ENCODE measurements at regions of chr15 and their contacts with region 1.

Region 1: GRCh38 chr15:90233376-90234095 is at the start of gene CIB1:
- DNase-seq: peak; percentile 98
- H3K4me3 Mint-ChIP-seq: peak within 1 kb of the TSS; percentile 89
- H3K27ac Mint-ChIP-seq: peak within 1 kb of the TSS; percentile 90
- H3K4me1 Mint-ChIP-seq: peaks cover 49% of the 10 kb centered on the region
- H3K27me3 Mint-ChIP-seq: no peaks in the 10 kb centered on the region
- total RNA-seq, gene CIB1: 156 to 171 TPM

Region 2: DNA sequence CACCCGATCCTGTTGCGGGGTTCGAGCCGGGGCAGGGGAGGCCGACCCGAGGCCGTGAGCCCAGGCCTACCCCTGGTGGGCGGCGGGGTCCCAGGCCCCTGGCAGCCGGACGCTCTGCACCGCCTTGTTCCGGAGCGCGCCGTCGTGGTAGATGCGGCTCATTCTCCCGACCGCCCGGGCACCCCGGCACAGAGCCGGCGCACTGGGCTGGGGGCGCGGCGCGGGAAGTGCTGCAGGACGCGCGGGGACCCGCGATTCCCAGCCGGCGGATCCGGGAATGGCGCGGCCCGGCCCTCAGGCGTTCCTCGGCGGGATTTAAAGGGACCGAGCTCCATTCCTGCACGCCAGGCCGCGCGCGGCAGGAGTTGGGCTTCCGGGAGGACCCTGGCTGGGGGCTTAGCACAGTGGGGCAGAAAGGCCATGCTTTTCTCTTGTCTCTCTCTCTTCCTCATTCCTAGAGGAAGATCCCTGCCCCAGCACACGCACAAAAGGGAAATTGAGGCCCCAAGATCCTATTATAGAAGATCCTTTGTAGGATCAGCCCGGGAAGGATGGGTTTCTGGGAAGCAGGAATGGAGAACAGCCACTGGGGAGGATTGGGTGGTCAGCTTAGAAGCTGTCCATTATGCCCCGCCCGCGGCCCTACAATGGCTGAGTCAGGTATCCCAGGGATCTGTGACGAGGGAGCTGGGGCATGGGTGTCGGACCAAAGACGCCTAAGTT is 320.7 kb before region 1 on chr15 and contains the start of gene ARPIN:
- CTCF ChIA-PET with region 1: no interaction called
- intact Hi-C with region 1: no loop called
- DNase-seq: no peak
- H3K4me3 Mint-ChIP-seq: peak within 1 kb of the TSS; percentile 19
- H3K27ac Mint-ChIP-seq: no peak within 1 kb of the TSS
- H3K4me1 Mint-ChIP-seq: peaks cover 6% of the 10 kb centered on the region
- H3K27me3 Mint-ChIP-seq: peaks cover 37% of the 10 kb centered on the region
- total RNA-seq, gene ARPIN: not detected

Region 3: DNA sequence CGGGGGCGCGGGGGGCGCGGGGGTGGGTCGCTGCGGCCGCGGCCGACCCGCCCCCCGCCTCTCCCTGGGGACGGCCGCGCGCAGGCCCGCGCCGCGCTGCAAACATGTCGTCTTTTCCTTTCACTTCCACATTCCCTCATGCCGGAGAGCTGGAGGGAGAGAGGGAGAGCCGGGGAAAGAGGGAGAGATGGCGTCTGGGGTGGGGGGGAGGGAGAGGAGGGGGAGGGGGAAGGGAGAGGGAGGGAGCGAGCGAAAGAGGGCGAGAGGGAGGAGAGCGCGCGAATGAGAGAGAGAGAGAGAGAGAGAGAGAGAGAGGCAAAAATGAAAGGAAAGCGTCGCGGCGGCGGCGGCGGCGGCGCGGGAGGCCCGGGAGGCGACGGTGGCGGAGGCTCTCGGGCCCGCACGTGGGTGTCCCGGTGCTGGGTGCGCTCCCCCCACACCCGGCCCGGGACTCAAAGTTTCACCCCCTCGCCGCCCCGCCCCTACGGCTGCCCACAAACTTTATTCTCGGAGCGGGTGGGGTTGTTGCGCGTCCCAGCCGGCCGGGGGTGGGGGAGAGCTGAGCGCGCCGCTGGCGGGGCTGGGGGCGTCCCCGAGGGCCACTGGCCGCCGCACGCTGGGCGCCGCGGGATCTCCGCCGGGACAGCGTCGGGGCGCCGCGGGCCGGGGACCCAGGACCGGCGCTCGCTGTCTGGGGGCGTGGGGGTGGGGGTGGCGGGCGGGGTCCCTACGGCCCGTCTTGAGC is 231.7 kb before region 1 on chr15:
- CTCF ChIA-PET with region 1: no interaction called
- intact Hi-C with region 1: loop called (anchors 5 kb)
- DNase-seq: peak; percentile 70
- H3K4me3 Mint-ChIP-seq: peak overlapping the region; percentile 82
- H3K27ac Mint-ChIP-seq: peak overlapping the region; percentile 75
- H3K4me1 Mint-ChIP-seq: peaks cover 57% of the 10 kb centered on the region
- H3K27me3 Mint-ChIP-seq: no peaks in the 10 kb centered on the region

Region 4: DNA sequence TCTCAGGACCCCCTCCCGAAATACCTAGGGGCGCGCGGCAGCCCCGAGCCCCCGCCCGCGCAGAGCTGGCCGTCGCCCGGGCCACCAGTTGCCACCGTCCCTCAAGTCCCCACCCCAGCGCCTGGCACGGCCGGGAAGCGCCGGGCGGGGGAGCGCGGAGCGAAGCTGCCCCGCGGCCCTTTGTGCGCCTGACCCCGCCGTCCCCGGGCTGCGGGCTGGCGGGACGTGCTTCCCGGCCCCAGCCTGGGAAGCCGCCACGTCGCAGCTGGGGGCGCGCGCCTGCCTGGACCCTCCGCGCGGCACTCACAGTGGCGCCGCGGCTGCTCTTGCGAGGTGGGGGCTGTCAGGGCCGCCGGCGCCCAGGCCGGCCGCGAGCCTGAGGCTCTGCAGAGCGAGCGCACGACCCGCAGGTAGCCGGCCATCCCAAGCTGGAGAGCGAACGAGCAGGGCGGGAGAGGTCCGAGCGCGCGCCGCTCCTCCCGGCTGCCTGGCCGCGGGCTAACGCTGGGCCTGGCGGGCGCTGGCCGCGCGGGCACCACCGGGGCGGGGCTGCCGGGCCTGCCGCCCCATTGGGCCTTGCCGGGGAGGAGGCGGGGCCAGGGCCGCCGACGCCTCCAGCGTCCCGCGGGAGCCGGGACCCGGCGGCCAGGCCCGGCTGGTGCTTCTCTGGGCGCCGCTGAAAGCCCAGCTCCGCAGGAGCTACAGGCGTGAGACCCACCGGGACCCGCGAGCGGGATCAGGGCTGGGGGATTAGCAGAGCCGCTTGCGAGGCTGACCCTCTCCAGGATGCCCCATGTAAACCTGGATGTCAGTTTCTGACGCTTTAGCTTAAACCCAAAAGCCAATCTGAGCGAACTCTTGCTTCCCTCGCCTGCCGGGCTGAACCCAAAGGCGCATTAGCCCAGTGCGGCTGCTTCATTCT is 131.3 kb before region 1 on chr15 and contains the start of gene IDH2:
- CTCF ChIA-PET with region 1: interaction called, 3 read pairs
- intact Hi-C with region 1: loop called (anchors 1 kb)
- DNase-seq: peak; percentile 64
- H3K4me3 Mint-ChIP-seq: peak within 1 kb of the TSS; percentile 91
- H3K27ac Mint-ChIP-seq: peak within 1 kb of the TSS; percentile 90
- H3K4me1 Mint-ChIP-seq: peaks cover 46% of the 10 kb centered on the region
- H3K27me3 Mint-ChIP-seq: no peaks in the 10 kb centered on the region
- total RNA-seq, gene IDH2: 225 to 229 TPM

Region 5: GRCh38 chr15:90184786-90185569 is 48.6 kb before region 1 on chr15:
- CTCF ChIA-PET with region 1: no interaction called
- intact Hi-C with region 1: loop called (anchors 2 kb)
- DNase-seq: peak; percentile 58
- H3K4me3 Mint-ChIP-seq: peak overlapping the region; percentile 72
- H3K27ac Mint-ChIP-seq: no peak overlapping the region
- H3K4me1 Mint-ChIP-seq: peaks cover 11% of the 10 kb centered on the region
- H3K27me3 Mint-ChIP-seq: no peaks in the 10 kb centered on the region

Region 6: GRCh38 chr15:90265271-90266060 is 31.9 kb after region 1 on chr15 and contains the start of gene NGRN:
- CTCF ChIA-PET with region 1: interaction called, 5 read pairs
- intact Hi-C with region 1: loop called (anchors 1 kb)
- DNase-seq: peak; percentile 95
- H3K4me3 Mint-ChIP-seq: peak within 1 kb of the TSS; percentile 83
- H3K27ac Mint-ChIP-seq: peak within 1 kb of the TSS; percentile 96
- H3K4me1 Mint-ChIP-seq: peaks cover 34% of the 10 kb centered on the region
- H3K27me3 Mint-ChIP-seq: no peaks in the 10 kb centered on the region
- total RNA-seq, gene NGRN: 30.7 to 31.0 TPM

Region 7: GRCh38 chr15:90387537-90388461 is 154.3 kb after region 1 on chr15 and contains the start of gene IQGAP1:
- CTCF ChIA-PET with region 1: no interaction called
- intact Hi-C with region 1: loop called (anchors 1 kb)
- DNase-seq: peak; percentile 99
- H3K4me3 Mint-ChIP-seq: peak within 1 kb of the TSS; percentile 89
- H3K27ac Mint-ChIP-seq: peak within 1 kb of the TSS; percentile 90
- H3K4me1 Mint-ChIP-seq: peaks cover 39% of the 10 kb centered on the region
- H3K27me3 Mint-ChIP-seq: no peaks in the 10 kb centered on the region
- total RNA-seq, gene IQGAP1: 136 to 143 TPM